CD8-positive, alpha-beta T cell (primary cell): ENCODE measurements at regions of chr7 and their contacts with region 1.

Region 1: DNA sequence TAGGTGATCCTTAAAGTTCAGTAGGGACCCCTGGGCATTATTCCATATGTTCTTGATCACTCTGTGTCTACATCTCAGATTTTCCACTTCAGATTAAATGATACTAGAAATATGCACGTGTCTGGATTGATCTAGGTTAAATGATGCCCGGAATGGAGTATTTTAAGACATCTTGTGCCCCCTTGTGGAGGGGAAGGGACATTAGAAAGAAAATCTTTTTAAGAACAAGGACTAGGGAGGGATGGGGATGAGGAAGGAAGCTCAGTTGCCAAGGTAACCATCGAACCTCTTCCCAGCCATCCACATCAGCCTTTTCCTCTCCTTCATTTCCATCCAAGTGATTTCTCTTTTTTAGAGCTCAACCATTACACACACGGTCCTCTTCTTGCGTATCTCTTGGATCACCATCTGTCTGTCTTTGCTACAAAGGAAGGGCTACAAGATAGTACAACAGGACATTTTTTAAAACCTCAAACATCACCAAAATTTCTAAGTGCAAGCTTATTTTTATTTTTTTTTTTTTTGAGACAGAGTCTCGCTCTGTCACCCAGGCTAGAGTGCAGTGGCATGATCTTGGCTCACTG is 40.5 kb downstream of the PRSS2 start:
- DNase-seq: peak in 4 of 9 experiments; percentile 41 to 87 (median 72)
- ATAC-seq: no peak
- H3K4me3 ChIP-seq: no peak overlapping the region
- H3K4me3 Mint-ChIP-seq: peak overlapping the region; percentile 26
- H3K27ac ChIP-seq: peak overlapping the region; percentile 86 to 99
- H3K27ac Mint-ChIP-seq: peak overlapping the region; percentile 100
- H3K4me1 ChIP-seq: peaks cover 71% of the 10 kb centered on the region
- H3K4me1 Mint-ChIP-seq: peaks cover 83% of the 10 kb centered on the region
- H3K27me3 ChIP-seq: no peaks in the 10 kb centered on the region
- H3K27me3 Mint-ChIP-seq: no peaks in the 10 kb centered on the region
- CTCF ChIP-seq: peak; percentile 80

Region 2: GRCh38 chr7:142323706-142324105 is 487.5 kb before region 1 on chr7:
- CTCF ChIA-PET with region 1: interaction called, 7 read pairs
- POLR2A ChIA-PET with region 1: interaction called, 18 read pairs
- intact Hi-C with region 1: loop called (anchors 1 kb)
- DNase-seq: peak in 5 of 9 experiments; percentile 49 to 65 (median 52)
- ATAC-seq: peak; percentile 47
- H3K4me3 ChIP-seq: no peak overlapping the region
- H3K4me3 Mint-ChIP-seq: no peak overlapping the region
- H3K27ac ChIP-seq: no peak overlapping the region
- H3K27ac Mint-ChIP-seq: peak overlapping the region; percentile 86
- H3K4me1 ChIP-seq: peaks cover 8% of the 10 kb centered on the region
- H3K4me1 Mint-ChIP-seq: peaks cover 27% of the 10 kb centered on the region
- H3K27me3 ChIP-seq: no peaks in the 10 kb centered on the region
- H3K27me3 Mint-ChIP-seq: peaks cover 7% of the 10 kb centered on the region
- CTCF ChIP-seq: peak; percentile 51

Region 3: GRCh38 chr7:142516038-142516501 is 295.2 kb before region 1 on chr7:
- CTCF ChIA-PET with region 1: interaction called, 7 read pairs
- POLR2A ChIA-PET with region 1: interaction called, 3 read pairs
- intact Hi-C with region 1: loop called (anchors 5 kb)
- DNase-seq: peak in 4 of 9 experiments; percentile 26 to 75 (median 46)
- ATAC-seq: peak; percentile 68
- H3K4me3 ChIP-seq: no peak overlapping the region
- H3K4me3 Mint-ChIP-seq: no peak overlapping the region
- H3K27ac ChIP-seq: no peak overlapping the region
- H3K27ac Mint-ChIP-seq: no peak overlapping the region
- H3K4me1 ChIP-seq: peaks cover 25% of the 10 kb centered on the region
- H3K4me1 Mint-ChIP-seq: peaks cover 48% of the 10 kb centered on the region
- H3K27me3 ChIP-seq: no peaks in the 10 kb centered on the region
- H3K27me3 Mint-ChIP-seq: no peaks in the 10 kb centered on the region
- CTCF ChIP-seq: peak; percentile 66

Region 4: DNA sequence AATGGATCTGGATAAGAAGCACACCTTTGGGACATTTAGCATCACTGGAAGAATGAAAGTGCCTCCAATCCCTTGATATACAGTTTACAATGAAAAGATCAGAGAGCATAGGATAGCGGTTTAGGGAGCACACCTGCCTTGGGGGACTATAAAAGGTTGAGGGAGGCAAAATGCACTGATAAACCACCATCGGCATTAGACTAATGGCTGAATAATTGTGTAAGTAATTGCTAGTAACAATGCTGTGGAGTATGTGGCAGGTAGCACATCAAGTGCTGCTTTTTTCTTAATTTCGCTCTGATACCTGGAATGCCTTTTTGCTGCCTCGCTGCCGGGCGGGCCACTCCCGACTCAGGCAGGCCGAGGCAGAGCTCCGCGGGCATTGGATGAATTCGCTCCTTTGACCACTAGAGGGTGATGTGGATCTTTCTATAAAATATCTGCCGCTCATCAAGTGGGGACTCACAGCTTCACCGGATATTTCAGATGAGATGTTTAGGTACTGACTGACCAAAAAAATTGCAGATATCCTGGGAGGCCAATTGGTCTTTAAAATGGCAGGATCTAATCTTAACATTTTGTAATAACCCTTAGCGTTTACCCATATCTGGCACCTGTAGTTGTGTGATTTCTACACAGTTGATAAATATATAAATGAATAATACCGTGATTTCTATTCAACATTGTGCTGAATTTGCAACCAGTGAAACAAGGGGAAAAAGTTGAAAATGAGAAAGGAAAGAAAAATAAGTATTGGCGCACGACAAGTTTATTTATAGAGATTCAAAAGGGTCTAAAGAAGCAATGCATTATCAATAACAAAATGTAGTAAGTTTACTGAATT is 178.7 kb before region 1 on chr7:
- CTCF ChIA-PET with region 1: interaction called, 65 read pairs
- POLR2A ChIA-PET with region 1: interaction called, 30 read pairs
- intact Hi-C with region 1: loop called (anchors 1 kb)
- DNase-seq: peak; percentile 10 to 82 (median 49)
- ATAC-seq: peak; percentile 51
- H3K4me3 ChIP-seq: no peak overlapping the region
- H3K4me3 Mint-ChIP-seq: no peak overlapping the region
- H3K27ac ChIP-seq: no peak overlapping the region
- H3K27ac Mint-ChIP-seq: peak overlapping the region; percentile 18
- H3K4me1 ChIP-seq: no peaks in the 10 kb centered on the region
- H3K4me1 Mint-ChIP-seq: peaks cover 13% of the 10 kb centered on the region
- H3K27me3 ChIP-seq: no peaks in the 10 kb centered on the region
- H3K27me3 Mint-ChIP-seq: peaks cover 2% of the 10 kb centered on the region
- CTCF ChIP-seq: peak; percentile 58

Region 5: GRCh38 chr7:142796608-142797385 is 14.4 kb before region 1 on chr7:
- CTCF ChIA-PET with region 1: interaction called, 490 read pairs
- POLR2A ChIA-PET with region 1: interaction called, 2,372 read pairs
- intact Hi-C with region 1: loop called (anchors 1 kb)
- DNase-seq: peak in 3 of 9 experiments; percentile 34 to 83 (median 35)
- ATAC-seq: peak; percentile 4
- H3K4me3 ChIP-seq: peak overlapping the region; percentile 81
- H3K4me3 Mint-ChIP-seq: peak overlapping the region; percentile 99
- H3K27ac ChIP-seq: peak overlapping the region; percentile 99
- H3K27ac Mint-ChIP-seq: peak overlapping the region; percentile 100
- H3K4me1 ChIP-seq: peaks cover 63% of the 10 kb centered on the region
- H3K4me1 Mint-ChIP-seq: peaks cover 70% of the 10 kb centered on the region
- H3K27me3 ChIP-seq: no peaks in the 10 kb centered on the region
- H3K27me3 Mint-ChIP-seq: no peaks in the 10 kb centered on the region
- CTCF ChIP-seq: no peak

Region 6: GRCh38 chr7:143008007-143008901 is 197.0 kb after region 1 on chr7:
- CTCF ChIA-PET with region 1: interaction called, 12 read pairs
- POLR2A ChIA-PET with region 1: interaction called, 4 read pairs
- intact Hi-C with region 1: no loop called
- DNase-seq: peak; percentile 70 to 89 (median 83)
- ATAC-seq: peak; percentile 98
- H3K4me3 ChIP-seq: no peak overlapping the region
- H3K4me3 Mint-ChIP-seq: no peak overlapping the region
- H3K27ac ChIP-seq: no peak overlapping the region
- H3K27ac Mint-ChIP-seq: no peak overlapping the region
- H3K4me1 ChIP-seq: no peaks in the 10 kb centered on the region
- H3K4me1 Mint-ChIP-seq: peaks cover 4% of the 10 kb centered on the region
- H3K27me3 ChIP-seq: peaks cover 0 to 2% of the 10 kb centered on the region in 2 experiments
- H3K27me3 Mint-ChIP-seq: peaks cover 8% of the 10 kb centered on the region
- CTCF ChIP-seq: peak; percentile 93

Region 7: DNA sequence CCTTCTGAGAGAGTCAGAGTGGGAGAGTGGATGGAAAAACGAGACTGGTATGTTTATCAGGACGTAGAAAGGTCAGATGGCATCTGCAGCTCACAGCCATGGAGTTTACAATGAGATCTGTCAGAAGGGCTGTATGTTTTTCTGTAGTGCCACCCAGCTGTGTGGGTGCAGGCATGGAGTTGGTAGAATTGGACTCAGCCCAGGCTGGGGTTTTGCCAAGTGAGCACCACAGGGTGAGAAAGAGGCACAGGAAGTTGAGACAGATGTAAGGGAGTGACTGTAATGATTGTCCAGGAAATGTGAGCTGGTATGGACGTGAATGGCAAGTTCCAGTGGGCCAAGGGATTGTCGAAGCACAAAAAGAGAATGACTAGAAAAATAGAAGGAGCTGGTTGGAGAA is 560.8 kb after region 1 on chr7:
- CTCF ChIA-PET with region 1: no interaction called
- POLR2A ChIA-PET with region 1: no interaction called
- intact Hi-C with region 1: loop called in 1 of 2 experiments (anchors 5 kb)
- DNase-seq: peak; percentile 36 to 81 (median 71)
- ATAC-seq: peak; percentile 33
- H3K4me3 ChIP-seq: no peak overlapping the region
- H3K4me3 Mint-ChIP-seq: peak overlapping the region; percentile 24
- H3K27ac ChIP-seq: peak overlapping the region in 1 of 2 experiments; percentile 36
- H3K27ac Mint-ChIP-seq: peak overlapping the region; percentile 75
- H3K4me1 ChIP-seq: peaks cover 58% of the 10 kb centered on the region
- H3K4me1 Mint-ChIP-seq: peaks cover 55% of the 10 kb centered on the region
- H3K27me3 ChIP-seq: no peaks in the 10 kb centered on the region
- H3K27me3 Mint-ChIP-seq: no peaks in the 10 kb centered on the region
- CTCF ChIP-seq: peak; percentile 18